Keratinocyte (primary cell): ENCODE measurements at regions of chr7 and their contacts with region 1.

Region 1: GRCh38 chr7:85890244-85890811 is 703.5 kb upstream of the SEMA3D start:
- DNase-seq: no peak
- H3K4me3 ChIP-seq: no peak overlapping the region
- H3K27ac ChIP-seq: no peak overlapping the region
- H3K4me1 ChIP-seq: no peaks in the 10 kb centered on the region
- H3K27me3 ChIP-seq: no peaks in the 10 kb centered on the region
- CTCF ChIP-seq: peak in 2 of 3 experiments; percentile 29 to 43

Region 2: GRCh38 chr7:85659364-85659763 is 231.0 kb before region 1 on chr7:
- dilution Hi-C with region 1: no loop called
- DNase-seq: no peak
- H3K4me3 ChIP-seq: no peak overlapping the region
- H3K27ac ChIP-seq: no peak overlapping the region
- H3K4me1 ChIP-seq: no peaks in the 10 kb centered on the region
- H3K27me3 ChIP-seq: no peaks in the 10 kb centered on the region
- CTCF ChIP-seq: no peak

Region 3: GRCh38 chr7:86469680-86470295 is 579.5 kb after region 1 on chr7:
- dilution Hi-C with region 1: loop called (anchors 25 kb)
- DNase-seq: peak; percentile 25
- H3K4me3 ChIP-seq: no peak overlapping the region
- H3K27ac ChIP-seq: no peak overlapping the region
- H3K4me1 ChIP-seq: no peaks in the 10 kb centered on the region
- H3K27me3 ChIP-seq: no peaks in the 10 kb centered on the region
- CTCF ChIP-seq: peak; percentile 60 to 83 (median 73)